ENCODE measurements at regions of chr1 and their contacts with region 1.

Region 1: GRCh38 chr1:28199328-28200233 is 23.1 kb upstream of the PTAFR start:
- DNase-seq: peak; percentile 74
- H3K4me3 Mint-ChIP-seq: peak overlapping the region; percentile 71
- H3K27ac Mint-ChIP-seq: peak overlapping the region; percentile 87
- H3K4me1 Mint-ChIP-seq: peaks cover 40% of the 10 kb centered on the region
- H3K27me3 Mint-ChIP-seq: peaks cover 5% of the 10 kb centered on the region

Region 2: GRCh38 chr1:28115267-28115666 is 84.3 kb before region 1 on chr1:
- intact Hi-C with region 1: loop called (anchors 1 kb)
- DNase-seq: peak; percentile 36
- H3K4me3 Mint-ChIP-seq: no peak overlapping the region
- H3K27ac Mint-ChIP-seq: no peak overlapping the region
- H3K4me1 Mint-ChIP-seq: peaks cover 20% of the 10 kb centered on the region
- H3K27me3 Mint-ChIP-seq: peaks cover 50% of the 10 kb centered on the region

Region 3: GRCh38 chr1:28144203-28145135 is 55.1 kb before region 1 on chr1:
- intact Hi-C with region 1: loop called (anchors 1 kb)
- DNase-seq: no peak
- H3K4me3 Mint-ChIP-seq: no peak overlapping the region
- H3K27ac Mint-ChIP-seq: no peak overlapping the region
- H3K4me1 Mint-ChIP-seq: peaks cover 11% of the 10 kb centered on the region
- H3K27me3 Mint-ChIP-seq: peaks cover 58% of the 10 kb centered on the region

Region 4: GRCh38 chr1:28172713-28173150 is 26.8 kb before region 1 on chr1:
- intact Hi-C with region 1: loop called (anchors 1 kb)
- DNase-seq: peak; percentile 65
- H3K4me3 Mint-ChIP-seq: peak overlapping the region; percentile 10
- H3K27ac Mint-ChIP-seq: no peak overlapping the region
- H3K4me1 Mint-ChIP-seq: peaks cover 37% of the 10 kb centered on the region
- H3K27me3 Mint-ChIP-seq: peaks cover 56% of the 10 kb centered on the region

Region 5: GRCh38 chr1:28180306-28181305 is 19.0 kb before region 1 on chr1:
- intact Hi-C with region 1: loop called (anchors 1 kb)
- DNase-seq: no peak
- H3K4me3 Mint-ChIP-seq: no peak overlapping the region
- H3K27ac Mint-ChIP-seq: no peak overlapping the region
- H3K4me1 Mint-ChIP-seq: peaks cover 11% of the 10 kb centered on the region
- H3K27me3 Mint-ChIP-seq: peaks cover 84% of the 10 kb centered on the region